Mammary epithelial cell (primary cell): ENCODE measurements at regions of chr19 and their contacts with region 1.

Region 1: DNA sequence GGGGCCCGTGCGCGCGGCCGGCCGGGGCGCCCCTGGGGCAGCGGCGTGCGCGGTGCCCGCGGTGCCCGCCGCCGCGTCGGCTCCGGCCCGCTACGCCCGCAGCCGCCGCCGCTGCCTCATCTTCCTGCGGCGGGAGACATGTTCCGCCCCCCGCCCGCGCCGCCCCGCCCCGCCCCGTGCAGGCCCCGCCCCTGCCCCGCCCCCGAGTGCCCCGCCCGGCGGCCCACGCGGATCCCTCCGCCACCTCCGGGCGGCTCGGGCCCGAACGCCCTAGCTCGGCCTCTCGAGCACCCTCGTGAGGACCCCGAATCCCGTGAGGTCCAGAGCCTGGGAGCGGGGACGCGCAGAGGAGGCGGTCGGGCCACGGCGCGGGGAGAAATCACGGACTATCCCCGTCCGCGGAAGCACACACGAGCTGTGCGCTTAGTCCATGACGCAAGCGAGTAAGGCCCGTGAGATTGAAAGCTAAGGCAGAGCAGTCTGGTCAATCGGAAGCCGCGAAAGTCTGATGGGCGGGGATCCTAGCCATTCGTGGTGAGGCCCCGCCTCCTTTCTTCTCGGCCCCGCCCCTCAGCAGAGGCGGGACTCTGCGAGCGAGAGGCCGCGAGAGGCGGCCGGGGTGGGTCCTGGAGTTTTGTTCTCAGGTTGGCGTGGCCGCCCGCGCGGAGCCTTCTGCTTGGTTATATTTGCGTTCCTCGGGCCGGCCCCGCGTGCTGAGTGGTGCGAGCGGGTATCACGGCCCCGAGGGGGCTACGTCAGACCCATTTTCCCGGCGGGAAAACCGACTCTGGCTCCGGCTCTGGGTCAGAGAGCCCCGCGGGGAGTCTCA is at the start of gene TCF3:
- DNase-seq: peak; percentile 99
- H3K4me3 ChIP-seq: peak within 1 kb of the TSS; percentile 74 to 94 (median 74)
- H3K27ac ChIP-seq: peak within 1 kb of the TSS; percentile 98
- H3K4me1 ChIP-seq: peaks cover 9% of the 10 kb centered on the region
- H3K27me3 ChIP-seq: no peaks in the 10 kb centered on the region
- CTCF ChIP-seq: no peak
- total RNA-seq, gene TCF3: 70.7 to 108 TPM

Region 2: DNA sequence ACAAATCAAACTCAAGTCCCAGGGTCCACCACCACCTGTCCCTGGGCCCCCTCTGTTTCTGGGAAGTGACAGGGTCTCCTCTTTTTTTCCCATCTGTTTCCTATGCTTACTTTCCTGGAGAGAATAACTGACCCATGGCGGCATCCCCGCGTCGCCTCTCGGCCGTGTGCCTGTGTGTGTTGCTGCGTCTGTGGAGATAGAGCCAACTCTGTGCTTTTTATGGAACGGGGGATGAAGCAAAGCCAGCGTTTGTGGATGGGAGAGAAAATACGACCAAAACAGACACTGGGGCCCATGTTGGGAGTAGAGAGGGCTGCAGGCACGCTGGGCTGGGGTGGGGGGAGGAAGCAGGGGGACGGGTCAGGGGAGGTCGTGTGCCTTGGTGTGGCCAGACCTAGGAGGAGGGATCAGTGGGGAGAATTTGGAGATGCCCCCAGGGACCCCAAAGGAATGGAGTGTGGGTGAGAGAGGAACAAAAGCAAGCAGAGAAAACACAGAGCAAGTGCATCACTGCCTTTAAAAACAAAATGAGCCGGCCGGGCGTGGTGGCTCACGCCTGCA is 112.2 kb before region 1 on chr19:
- CTCF ChIA-PET with region 1: no interaction called
- dilution Hi-C with region 1: no loop called
- in situ Hi-C with region 1: loop called in 1 of 2 experiments (anchors 10 kb)
- intact Hi-C with region 1: no loop called
- DNase-seq: no peak
- H3K4me3 ChIP-seq: no peak overlapping the region
- H3K27ac ChIP-seq: no peak overlapping the region
- H3K4me1 ChIP-seq: no peaks in the 10 kb centered on the region
- H3K27me3 ChIP-seq: no peaks in the 10 kb centered on the region
- CTCF ChIP-seq: no peak

Region 3: GRCh38 chr19:1618157-1619093 is 34.3 kb before region 1 on chr19:
- CTCF ChIA-PET with region 1: no interaction called
- dilution Hi-C with region 1: loop called (anchors 5 kb)
- in situ Hi-C with region 1: no loop called
- intact Hi-C with region 1: no loop called
- DNase-seq: peak; percentile 24
- H3K4me3 ChIP-seq: no peak overlapping the region
- H3K27ac ChIP-seq: no peak overlapping the region
- H3K4me1 ChIP-seq: no peaks in the 10 kb centered on the region
- H3K27me3 ChIP-seq: no peaks in the 10 kb centered on the region
- CTCF ChIP-seq: peak; percentile 40 to 62